ENCODE measurements at regions of chr13 and their contacts with region 1.

Region 1: GRCh38 chr13:30132623-30133553 is 174.5 kb downstream of the KATNAL1 start:
- DNase-seq: peak; percentile 92 to 100 (median 97)
- ATAC-seq: peak; percentile 100
- H3K4me3 ChIP-seq: no peak overlapping the region
- H3K4me3 Mint-ChIP-seq: peak overlapping the region; percentile 65
- H3K27ac ChIP-seq: no peak overlapping the region
- H3K27ac Mint-ChIP-seq: peak overlapping the region; percentile 77
- H3K4me1 ChIP-seq: peaks cover 9% of the 10 kb centered on the region
- H3K4me1 Mint-ChIP-seq: peaks cover 12% of the 10 kb centered on the region
- H3K27me3 ChIP-seq: no peaks in the 10 kb centered on the region
- H3K27me3 Mint-ChIP-seq: no peaks in the 10 kb centered on the region
- CTCF ChIP-seq: peak; percentile 79

Region 2: DNA sequence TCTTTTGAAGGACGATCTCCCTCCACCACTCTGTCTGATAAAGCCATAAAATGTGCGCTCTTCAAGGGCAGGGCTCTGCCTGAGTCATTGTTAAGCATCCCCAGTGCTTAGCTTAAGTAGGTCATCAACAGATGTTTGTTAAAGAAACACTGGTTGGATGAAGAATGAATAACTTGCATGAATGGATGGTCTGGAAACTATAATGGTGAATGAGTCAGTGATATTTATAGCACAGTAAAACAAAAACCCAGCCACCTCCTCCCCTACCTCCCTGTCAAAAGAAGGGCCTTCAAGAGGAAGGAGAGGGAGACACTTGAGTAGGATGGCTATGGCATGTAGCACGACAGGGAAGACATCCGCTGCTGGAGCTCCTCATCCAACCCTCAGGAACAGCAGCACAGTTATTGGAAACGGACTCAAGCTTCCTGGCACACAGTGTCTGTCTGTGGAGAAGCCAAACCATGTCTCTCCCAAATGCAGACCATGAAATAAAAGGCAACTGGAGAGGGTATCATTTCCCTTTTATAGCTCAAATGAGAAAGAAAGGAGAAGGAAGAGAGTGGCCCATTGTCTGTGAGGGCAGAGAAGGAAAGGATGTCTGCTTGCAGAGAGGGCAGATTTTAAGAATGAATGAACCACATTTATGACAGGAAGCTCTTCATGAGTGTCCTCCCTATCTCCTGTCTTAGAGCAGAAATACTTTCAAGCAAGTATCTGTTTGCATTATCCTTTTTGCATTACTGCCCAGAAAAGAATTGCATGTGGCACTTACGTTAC is 99.0 kb before region 1 on chr13:
- CTCF ChIA-PET with region 1: no interaction called
- POLR2A ChIA-PET with region 1: no interaction called
- intact Hi-C with region 1: no loop called
- DNase-seq: no peak
- ATAC-seq: no peak
- H3K4me3 ChIP-seq: no peak overlapping the region
- H3K4me3 Mint-ChIP-seq: no peak overlapping the region
- H3K27ac ChIP-seq: no peak overlapping the region
- H3K27ac Mint-ChIP-seq: no peak overlapping the region
- H3K4me1 ChIP-seq: no peaks in the 10 kb centered on the region
- H3K4me1 Mint-ChIP-seq: no peaks in the 10 kb centered on the region
- H3K27me3 ChIP-seq: no peaks in the 10 kb centered on the region
- H3K27me3 Mint-ChIP-seq: peaks cover 6% of the 10 kb centered on the region
- CTCF ChIP-seq: no peak

Region 3: DNA sequence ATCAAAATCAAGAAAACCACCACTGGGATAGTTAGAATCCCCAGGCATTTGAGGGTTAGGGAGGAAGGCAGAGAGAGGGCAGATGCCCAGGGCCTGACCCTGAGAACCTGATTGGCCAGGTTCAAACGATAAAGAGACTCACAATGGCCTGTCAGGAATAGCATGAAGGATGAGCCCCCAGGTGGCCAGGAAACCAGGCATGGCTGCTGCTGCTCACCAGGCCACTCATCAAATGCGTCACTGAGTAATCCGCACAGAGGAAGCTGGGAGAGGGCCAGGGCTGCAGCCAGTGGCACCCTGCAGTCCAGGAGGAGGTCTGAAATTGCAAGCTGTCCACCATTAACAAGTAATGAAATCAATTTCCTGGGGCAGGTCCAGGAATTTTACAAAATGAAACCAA is 63.1 kb after region 1 on chr13:
- CTCF ChIA-PET with region 1: interaction called, 5 read pairs
- POLR2A ChIA-PET with region 1: no interaction called
- intact Hi-C with region 1: loop called in 1 of 2 experiments (anchors 2 kb)
- DNase-seq: no peak
- ATAC-seq: no peak
- H3K4me3 ChIP-seq: no peak overlapping the region
- H3K4me3 Mint-ChIP-seq: no peak overlapping the region
- H3K27ac ChIP-seq: no peak overlapping the region
- H3K27ac Mint-ChIP-seq: no peak overlapping the region
- H3K4me1 ChIP-seq: no peaks in the 10 kb centered on the region
- H3K4me1 Mint-ChIP-seq: peaks cover 2% of the 10 kb centered on the region
- H3K27me3 ChIP-seq: no peaks in the 10 kb centered on the region
- H3K27me3 Mint-ChIP-seq: no peaks in the 10 kb centered on the region
- CTCF ChIP-seq: no peak

Region 4: DNA sequence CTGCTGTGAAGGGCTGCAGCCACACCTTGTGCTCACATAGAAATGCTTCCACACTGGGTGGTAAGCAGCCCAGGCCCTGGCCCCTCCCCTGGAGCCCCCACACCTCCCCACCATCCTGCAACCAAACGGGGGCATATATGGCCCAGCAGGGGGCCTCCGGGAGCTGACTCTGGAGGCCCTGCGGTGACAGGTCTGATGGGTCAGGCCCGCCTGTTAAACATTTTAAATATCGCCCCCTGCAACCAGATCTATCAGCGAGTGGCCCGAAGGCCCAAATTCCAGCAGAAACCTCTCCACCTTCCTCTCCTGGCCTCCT is 222.5 kb after region 1 on chr13:
- CTCF ChIA-PET with region 1: interaction called, 14 read pairs
- POLR2A ChIA-PET with region 1: no interaction called
- intact Hi-C with region 1: loop called in 1 of 2 experiments (anchors 2 kb)
- DNase-seq: peak; percentile 12 to 76 (median 60)
- ATAC-seq: peak; percentile 96
- H3K4me3 ChIP-seq: no peak overlapping the region
- H3K4me3 Mint-ChIP-seq: peak overlapping the region; percentile 47
- H3K27ac ChIP-seq: no peak overlapping the region
- H3K27ac Mint-ChIP-seq: peak overlapping the region; percentile 37
- H3K4me1 ChIP-seq: peaks cover 18% of the 10 kb centered on the region
- H3K4me1 Mint-ChIP-seq: peaks cover 25% of the 10 kb centered on the region
- H3K27me3 ChIP-seq: no peaks in the 10 kb centered on the region
- H3K27me3 Mint-ChIP-seq: no peaks in the 10 kb centered on the region
- CTCF ChIP-seq: peak; percentile 64

Region 5: GRCh38 chr13:30431283-30431932 is 298.5 kb after region 1 on chr13:
- CTCF ChIA-PET with region 1: no interaction called
- POLR2A ChIA-PET with region 1: no interaction called
- intact Hi-C with region 1: no loop called
- DNase-seq: no peak
- ATAC-seq: no peak
- H3K4me3 ChIP-seq: no peak overlapping the region
- H3K4me3 Mint-ChIP-seq: no peak overlapping the region
- H3K27ac ChIP-seq: no peak overlapping the region
- H3K27ac Mint-ChIP-seq: no peak overlapping the region
- H3K4me1 ChIP-seq: no peaks in the 10 kb centered on the region
- H3K4me1 Mint-ChIP-seq: peaks cover 16% of the 10 kb centered on the region
- H3K27me3 ChIP-seq: no peaks in the 10 kb centered on the region
- H3K27me3 Mint-ChIP-seq: no peaks in the 10 kb centered on the region
- CTCF ChIP-seq: no peak

Region 6: GRCh38 chr13:30551189-30551588 is 418.3 kb after region 1 on chr13:
- CTCF ChIA-PET with region 1: interaction called, 14 read pairs
- POLR2A ChIA-PET with region 1: no interaction called
- intact Hi-C with region 1: loop called in 1 of 2 experiments (anchors 2 kb)
- DNase-seq: peak in 3 of 9 experiments; percentile 11 to 67 (median 52)
- ATAC-seq: peak; percentile 83
- H3K4me3 ChIP-seq: no peak overlapping the region
- H3K4me3 Mint-ChIP-seq: no peak overlapping the region
- H3K27ac ChIP-seq: no peak overlapping the region
- H3K27ac Mint-ChIP-seq: no peak overlapping the region
- H3K4me1 ChIP-seq: no peaks in the 10 kb centered on the region
- H3K4me1 Mint-ChIP-seq: peaks cover 5% of the 10 kb centered on the region
- H3K27me3 ChIP-seq: no peaks in the 10 kb centered on the region
- H3K27me3 Mint-ChIP-seq: no peaks in the 10 kb centered on the region
- CTCF ChIP-seq: peak; percentile 33

Region 7: DNA sequence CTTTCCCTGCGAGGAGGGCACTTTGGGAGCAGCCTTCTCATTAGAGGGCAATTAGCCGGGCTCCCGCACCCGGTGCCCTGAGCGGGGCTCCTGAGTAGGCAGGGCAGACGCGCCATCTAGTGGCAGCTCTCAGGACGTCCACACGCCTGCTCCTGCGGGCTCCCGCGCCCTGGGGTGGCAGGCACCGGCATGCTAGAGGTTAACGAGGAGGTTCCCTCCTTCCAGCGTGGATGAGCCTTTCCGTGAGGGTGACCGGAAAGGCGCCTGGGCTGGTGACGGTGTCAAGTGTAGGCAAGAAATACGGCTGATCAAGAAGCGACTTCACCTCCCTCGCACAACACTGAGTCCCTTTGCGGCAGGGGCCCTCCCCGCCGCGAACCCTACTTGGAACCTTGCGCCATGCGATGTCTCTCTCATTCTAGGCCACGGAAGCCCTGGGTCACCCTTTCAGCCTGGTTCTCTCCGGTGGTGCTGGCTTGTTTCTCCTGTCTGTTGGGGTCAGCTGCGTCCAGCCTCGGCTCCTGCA is 670.1 kb after region 1 on chr13:
- CTCF ChIA-PET with region 1: interaction called, 5 read pairs
- POLR2A ChIA-PET with region 1: no interaction called
- intact Hi-C with region 1: loop called (anchors 1 to 2 kb)
- DNase-seq: peak; percentile 61 to 89 (median 80)
- ATAC-seq: peak; percentile 99
- H3K4me3 ChIP-seq: no peak overlapping the region
- H3K4me3 Mint-ChIP-seq: peak overlapping the region; percentile 49
- H3K27ac ChIP-seq: no peak overlapping the region
- H3K27ac Mint-ChIP-seq: no peak overlapping the region
- H3K4me1 ChIP-seq: no peaks in the 10 kb centered on the region
- H3K4me1 Mint-ChIP-seq: peaks cover 11% of the 10 kb centered on the region
- H3K27me3 ChIP-seq: no peaks in the 10 kb centered on the region
- H3K27me3 Mint-ChIP-seq: no peaks in the 10 kb centered on the region
- CTCF ChIP-seq: peak; percentile 95

Measured in CD8-positive, alpha-beta T cell (primary cell).